ENCODE measurements at regions of chr14 and their contacts with region 1.

Region 1: DNA sequence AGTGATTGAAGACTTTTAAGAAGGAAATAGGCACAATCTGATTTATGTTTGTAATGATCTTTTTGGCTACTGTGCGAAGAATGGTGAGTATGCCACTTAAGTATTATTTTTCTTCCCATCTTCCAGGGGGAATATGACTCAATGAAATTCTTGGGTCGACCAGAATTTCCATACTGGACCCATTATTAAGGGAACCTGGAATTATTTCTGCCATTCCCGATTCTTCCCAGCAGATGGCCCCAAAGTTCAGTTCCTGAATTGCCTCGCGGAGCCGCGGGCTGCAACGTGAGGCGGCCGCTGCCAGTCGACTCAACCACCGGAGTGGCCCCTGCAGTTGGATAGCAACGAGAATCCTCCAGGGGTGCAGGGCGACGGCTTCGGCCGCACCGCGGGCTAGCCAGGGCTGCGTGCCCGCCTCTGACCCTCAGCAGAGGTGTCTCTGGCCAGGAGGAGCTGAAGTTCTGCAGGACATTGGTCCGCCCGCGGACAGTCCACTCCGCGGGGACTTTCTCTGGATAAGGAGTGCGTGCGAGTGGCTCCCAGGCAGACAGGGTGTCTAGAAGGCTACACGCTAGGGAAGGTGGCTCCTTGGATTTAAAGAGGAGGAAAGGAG is 628 bp upstream of the TSHR start:
- DNase-seq: peak; percentile 42
- H3K4me3 ChIP-seq: peak overlapping the region; percentile 71
- H3K27ac ChIP-seq: no peak overlapping the region
- H3K27me3 ChIP-seq: peaks cover 8% of the 10 kb centered on the region
- CTCF ChIP-seq: peak; percentile 85

Region 2: GRCh38 chr14:80919622-80920021 is 35.2 kb before region 1 on chr14:
- CTCF ChIA-PET with region 1: no interaction called
- POLR2A ChIA-PET with region 1: no interaction called
- DNase-seq: no peak
- H3K4me3 ChIP-seq: no peak overlapping the region
- H3K27ac ChIP-seq: no peak overlapping the region
- H3K27me3 ChIP-seq: no peaks in the 10 kb centered on the region
- CTCF ChIP-seq: no peak

Region 3: DNA sequence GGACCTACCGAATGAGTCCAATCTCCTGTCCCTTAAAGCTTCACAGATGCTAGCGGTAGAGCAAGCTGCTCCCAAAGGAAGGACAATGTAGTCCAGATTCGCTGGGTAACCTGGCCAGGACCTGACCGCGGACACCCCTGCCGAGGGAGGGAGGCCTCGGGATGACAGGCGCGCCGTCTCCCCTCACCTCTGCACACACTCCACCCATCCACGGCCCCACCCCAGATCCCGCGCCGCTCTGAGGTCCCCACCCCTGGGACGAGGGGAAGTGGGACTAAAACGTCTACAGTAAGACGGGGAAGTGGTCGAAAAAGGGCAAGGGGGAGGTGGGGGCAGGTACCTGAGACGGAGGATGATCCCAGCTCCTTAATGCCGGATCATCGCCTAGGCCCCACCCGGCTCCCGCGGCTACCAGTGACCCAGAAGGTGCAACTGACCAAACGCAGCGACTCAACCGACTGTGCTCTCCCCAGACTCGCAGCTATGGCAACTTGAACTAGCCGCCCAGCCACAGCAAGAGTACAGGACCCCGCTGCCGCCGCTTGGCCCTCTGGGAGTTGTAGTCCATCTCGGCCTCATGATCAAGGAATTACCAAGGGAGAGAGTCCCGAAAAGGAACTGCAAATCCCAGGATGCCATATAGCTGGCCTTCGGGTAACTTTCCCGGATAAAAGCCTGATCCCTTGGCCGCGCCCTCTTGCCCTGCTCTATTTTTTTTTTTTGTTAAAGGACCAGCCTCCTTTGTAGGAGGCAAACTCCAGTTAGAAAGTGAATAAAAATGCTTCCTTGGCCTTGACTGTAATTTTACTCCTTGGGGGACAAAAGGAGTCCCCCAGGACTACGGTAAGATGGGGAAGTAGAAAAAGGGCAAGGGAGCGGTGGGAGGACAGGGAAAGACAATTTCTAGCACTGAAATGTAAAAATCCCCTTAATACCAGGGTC is 13.3 kb before region 1 on chr14 and contains the start of gene CEP128:
- CTCF ChIA-PET with region 1: interaction called, 16 read pairs
- POLR2A ChIA-PET with region 1: no interaction called
- DNase-seq: peak; percentile 95
- H3K4me3 ChIP-seq: peak within 1 kb of the TSS; percentile 85
- H3K27ac ChIP-seq: no peak within 1 kb of the TSS
- H3K27me3 ChIP-seq: no peaks in the 10 kb centered on the region
- CTCF ChIP-seq: no peak
- polyA plus RNA-seq, gene CEP128: 1.0 and 1.8 TPM in 2 replicates